Calu3 (cell line): ENCODE measurements at regions of chr2 and their contacts with region 1.

Region 1: GRCh38 chr2:24075915-24076848 is at the start of gene SF3B6:
- DNase-seq: peak; percentile 100
- H3K4me3 Mint-ChIP-seq: peak within 1 kb of the TSS; percentile 79
- H3K27ac Mint-ChIP-seq: peak within 1 kb of the TSS; percentile 80
- H3K4me1 Mint-ChIP-seq: peaks cover 15% of the 10 kb centered on the region
- H3K27me3 Mint-ChIP-seq: no peaks in the 10 kb centered on the region
- CTCF ChIP-seq: no peak
- total RNA-seq, gene SF3B6: 112 and 125 TPM in 2 replicates

Region 2: GRCh38 chr2:24046930-24047702 is 29.1 kb before region 1 on chr2 and contains the start of gene WDCP:
- CTCF ChIA-PET with region 1: interaction called, 8 read pairs
- intact Hi-C with region 1: loop called (anchors 2 kb)
- DNase-seq: peak; percentile 94
- H3K4me3 Mint-ChIP-seq: peak within 1 kb of the TSS; percentile 88
- H3K27ac Mint-ChIP-seq: peak within 1 kb of the TSS; percentile 50
- H3K4me1 Mint-ChIP-seq: peaks cover 9% of the 10 kb centered on the region
- H3K27me3 Mint-ChIP-seq: no peaks in the 10 kb centered on the region
- CTCF ChIP-seq: no peak
- total RNA-seq, gene WDCP: 13.4 and 17.2 TPM in 2 replicates

Region 3: GRCh38 chr2:24153478-24153877 is 77.3 kb after region 1 on chr2:
- CTCF ChIA-PET with region 1: no interaction called
- intact Hi-C with region 1: no loop called
- DNase-seq: no peak
- H3K4me3 Mint-ChIP-seq: no peak overlapping the region
- H3K27ac Mint-ChIP-seq: no peak overlapping the region
- H3K4me1 Mint-ChIP-seq: no peaks in the 10 kb centered on the region
- H3K27me3 Mint-ChIP-seq: no peaks in the 10 kb centered on the region
- CTCF ChIP-seq: no peak

Region 4: GRCh38 chr2:24164125-24164973 is 88.2 kb after region 1 on chr2:
- CTCF ChIA-PET with region 1: no interaction called
- intact Hi-C with region 1: loop called (anchors 5 kb)
- DNase-seq: peak; percentile 65
- H3K4me3 Mint-ChIP-seq: no peak overlapping the region
- H3K27ac Mint-ChIP-seq: no peak overlapping the region
- H3K4me1 Mint-ChIP-seq: no peaks in the 10 kb centered on the region
- H3K27me3 Mint-ChIP-seq: peaks cover 16% of the 10 kb centered on the region
- CTCF ChIP-seq: peak; percentile 95